Lower lobe of right lung (tissue), 2 donors: ENCODE measurements at regions of chr11 and their contacts with region 1.

Region 1: GRCh38 chr11:45110562-45110961 is 35.9 kb upstream of the PRDM11 start:
- DNase-seq: no peak
- ATAC-seq: peak; percentile 75 to 81
- H3K4me3 ChIP-seq: no peak overlapping the region
- H3K27ac ChIP-seq: no peak overlapping the region
- H3K4me1 ChIP-seq: no peaks in the 10 kb centered on the region
- H3K27me3 ChIP-seq: peaks cover 6% of the 10 kb centered on the region
- CTCF ChIP-seq: peak; percentile 77

Region 2: GRCh38 chr11:44505581-44506054 is 604.9 kb before region 1 on chr11:
- intact Hi-C with region 1: no loop called
- DNase-seq: no peak
- ATAC-seq: no peak
- H3K4me3 ChIP-seq: no peak overlapping the region
- H3K27ac ChIP-seq: no peak overlapping the region
- H3K4me1 ChIP-seq: no peaks in the 10 kb centered on the region
- H3K27me3 ChIP-seq: peaks cover 3% of the 10 kb centered on the region
- CTCF ChIP-seq: no peak

Region 3: DNA sequence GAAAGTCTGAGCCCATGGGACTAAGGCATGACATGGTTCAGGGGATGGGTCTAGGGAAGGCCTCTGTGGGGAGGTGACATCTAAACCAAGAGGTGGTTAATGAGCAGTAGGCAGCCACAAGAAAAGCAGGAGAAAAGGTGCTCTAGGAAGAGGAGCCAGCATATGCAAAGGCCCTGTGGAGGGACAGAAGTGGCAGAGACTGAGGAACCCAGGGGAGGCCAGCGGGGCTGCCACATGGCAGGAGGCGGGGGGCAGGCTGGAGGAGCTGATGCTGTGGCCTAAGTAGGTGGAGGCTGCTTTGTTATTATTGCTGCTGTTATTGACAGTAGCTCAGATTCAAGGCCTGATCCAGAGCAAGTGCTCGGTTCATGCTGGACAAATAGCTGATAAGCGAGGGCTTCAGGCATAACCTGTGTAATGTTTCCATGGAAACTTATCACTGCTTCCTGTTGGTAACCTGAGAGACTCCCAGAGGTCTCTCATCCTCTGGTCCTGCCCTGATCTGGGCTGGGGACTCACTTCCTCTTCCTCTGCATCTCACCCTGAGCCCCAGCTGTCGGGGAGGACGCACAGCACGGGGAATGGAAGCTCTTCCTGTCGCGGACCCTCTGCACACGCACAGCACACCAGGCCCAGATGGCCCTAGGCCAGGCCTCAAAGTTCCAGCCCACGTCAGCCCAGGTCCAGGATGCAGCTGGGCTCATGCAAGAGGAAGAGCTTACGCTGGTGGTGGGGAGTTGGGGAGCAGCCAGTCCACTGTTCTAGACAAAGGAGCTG is 84.7 kb before region 1 on chr11:
- intact Hi-C with region 1: no loop called
- DNase-seq: no peak
- ATAC-seq: peak; percentile 50 to 58
- H3K4me3 ChIP-seq: no peak overlapping the region
- H3K27ac ChIP-seq: peak overlapping the region; percentile 26
- H3K4me1 ChIP-seq: peaks cover 20% of the 10 kb centered on the region
- H3K27me3 ChIP-seq: no peaks in the 10 kb centered on the region
- CTCF ChIP-seq: no peak

Region 4: DNA sequence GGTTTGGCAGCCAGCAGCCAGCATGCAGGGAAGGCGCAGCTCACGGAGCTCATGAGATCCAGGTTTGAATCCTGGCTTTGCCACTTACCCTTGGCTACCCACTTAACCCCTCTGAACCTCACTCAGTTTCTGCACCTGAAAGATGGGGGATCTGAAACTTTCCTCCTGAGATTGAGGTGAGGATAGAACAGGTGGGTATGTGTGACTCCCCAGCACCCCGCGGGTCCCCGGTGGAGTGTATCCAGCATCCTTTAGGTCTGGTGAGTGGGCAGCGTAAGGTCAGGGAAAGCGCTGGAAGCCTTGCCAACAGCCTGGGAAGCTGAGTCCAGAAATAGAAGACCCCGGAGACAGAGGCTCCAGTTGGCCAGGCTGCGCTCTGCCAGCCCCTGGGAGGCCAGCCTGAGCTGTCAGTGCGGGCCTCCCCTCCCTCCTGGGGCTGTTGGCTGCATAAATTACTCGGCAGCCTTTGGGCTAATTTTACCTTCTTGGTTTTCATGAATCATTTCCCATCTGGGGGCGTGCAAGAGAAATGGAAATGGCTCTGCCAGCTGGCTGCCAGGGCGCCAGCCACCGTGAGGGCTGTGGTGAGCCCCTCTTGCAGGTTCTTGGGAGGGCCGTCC is 53.5 kb after region 1 on chr11:
- intact Hi-C with region 1: no loop called
- DNase-seq: no peak
- ATAC-seq: no peak
- H3K4me3 ChIP-seq: no peak overlapping the region
- H3K27ac ChIP-seq: no peak overlapping the region
- H3K4me1 ChIP-seq: peaks cover 19% of the 10 kb centered on the region
- H3K27me3 ChIP-seq: no peaks in the 10 kb centered on the region
- CTCF ChIP-seq: no peak

Region 5: GRCh38 chr11:45294499-45294898 is 183.9 kb after region 1 on chr11:
- intact Hi-C with region 1: loop called (anchors 5 kb)
- DNase-seq: no peak
- ATAC-seq: peak in 1 of 2 donors; percentile 25
- H3K4me3 ChIP-seq: no peak overlapping the region
- H3K27ac ChIP-seq: no peak overlapping the region
- H3K4me1 ChIP-seq: no peaks in the 10 kb centered on the region
- H3K27me3 ChIP-seq: peaks cover 14% of the 10 kb centered on the region
- CTCF ChIP-seq: no peak